ENCODE measurements at regions of chr5 and their contacts with region 1.

Region 1: GRCh38 chr5:141757402-141757801 is 75.4 kb upstream of the ARAP3 start:
- DNase-seq: peak; percentile 70
- ATAC-seq: peak; percentile 62
- H3K4me3 Mint-ChIP-seq: peak overlapping the region; percentile 24; the same call in 1 of the 2 replicates
- H3K27ac Mint-ChIP-seq: no peak overlapping the region
- H3K4me1 Mint-ChIP-seq: peaks cover 49% of the 10 kb centered on the region
- H3K27me3 Mint-ChIP-seq: peaks cover 21% of the 10 kb centered on the region
- CTCF ChIP-seq: 0 out of 2 replicates have a peak, but pooled peaks have one; percentile 13

Region 2: DNA sequence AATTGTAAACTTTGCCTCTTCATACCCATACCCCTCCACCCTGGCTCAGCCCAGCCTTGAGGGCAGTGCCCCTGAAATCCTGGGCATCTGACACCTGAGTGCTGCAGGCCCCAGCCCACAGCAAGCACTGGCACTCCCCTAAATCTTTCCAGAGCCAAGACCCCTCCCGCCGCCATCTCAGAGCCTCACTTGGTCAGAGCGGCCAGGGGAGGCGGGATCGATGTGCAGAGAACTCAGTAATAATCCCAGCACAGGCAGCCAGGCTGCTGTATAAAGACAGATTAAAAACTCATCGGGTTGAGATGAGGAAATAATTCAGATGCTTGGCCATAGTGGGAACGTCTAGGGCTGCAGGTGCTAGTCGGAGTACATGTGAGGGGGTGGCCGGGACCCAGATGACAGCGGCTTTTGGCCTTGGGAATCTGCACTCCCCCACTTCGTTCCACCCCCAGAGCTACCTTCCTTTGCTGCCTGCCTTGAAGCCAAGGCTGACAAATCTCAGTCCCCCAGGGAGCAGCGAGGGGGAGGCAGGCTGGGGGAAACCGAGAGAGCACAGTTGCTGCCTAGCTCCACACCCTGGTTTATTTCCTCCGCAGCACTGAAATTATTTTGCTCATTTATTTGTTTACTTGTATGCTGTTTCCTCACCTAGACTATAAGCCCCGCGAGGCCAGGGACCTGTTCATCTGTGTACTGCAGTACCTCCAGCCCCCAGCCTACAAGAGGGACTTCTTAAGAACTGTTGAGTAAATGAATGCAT is 55.9 kb before region 1 on chr5:
- CTCF ChIA-PET with region 1: interaction called, 39 read pairs
- POLR2A ChIA-PET with region 1: no interaction called
- DNase-seq: no peak
- ATAC-seq: no peak
- H3K4me3 Mint-ChIP-seq: no peak overlapping the region; the same call in 1 of the 2 replicates
- H3K27ac Mint-ChIP-seq: no peak overlapping the region
- H3K4me1 Mint-ChIP-seq: peaks cover 22% of the 10 kb centered on the region
- H3K27me3 Mint-ChIP-seq: peaks cover 6% of the 10 kb centered on the region
- CTCF ChIP-seq: no peak

Region 3: DNA sequence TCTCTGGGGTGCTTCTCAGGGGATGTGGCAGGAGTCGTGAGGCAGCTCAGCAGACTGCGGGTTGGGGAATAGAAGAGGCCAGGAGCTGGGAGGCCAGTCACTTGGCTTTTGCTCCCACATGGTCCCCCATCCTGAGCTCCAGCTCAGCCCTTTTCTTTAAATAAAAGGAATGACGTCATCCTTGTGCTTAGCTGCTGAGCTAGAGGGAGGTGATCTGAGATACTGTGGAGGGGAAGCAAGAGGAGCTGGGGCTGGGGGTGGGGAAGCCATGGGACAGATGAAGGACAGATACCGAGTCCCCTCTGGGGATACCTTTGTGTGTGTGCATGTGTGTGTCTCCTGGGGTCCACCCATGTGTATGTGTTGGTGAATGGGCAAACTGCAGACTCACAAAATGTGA is 13.6 kb after region 1 on chr5:
- CTCF ChIA-PET with region 1: interaction called, 24 read pairs
- POLR2A ChIA-PET with region 1: no interaction called
- DNase-seq: no peak
- ATAC-seq: 0 out of 2 replicates have a peak, but pooled peaks have one; percentile 13
- H3K4me3 Mint-ChIP-seq: no peak overlapping the region
- H3K27ac Mint-ChIP-seq: no peak overlapping the region
- H3K4me1 Mint-ChIP-seq: peaks cover 20% of the 10 kb centered on the region
- H3K27me3 Mint-ChIP-seq: peaks cover 2% of the 10 kb centered on the region; the same call in 1 of the 2 replicates
- CTCF ChIP-seq: no peak

Region 4: DNA sequence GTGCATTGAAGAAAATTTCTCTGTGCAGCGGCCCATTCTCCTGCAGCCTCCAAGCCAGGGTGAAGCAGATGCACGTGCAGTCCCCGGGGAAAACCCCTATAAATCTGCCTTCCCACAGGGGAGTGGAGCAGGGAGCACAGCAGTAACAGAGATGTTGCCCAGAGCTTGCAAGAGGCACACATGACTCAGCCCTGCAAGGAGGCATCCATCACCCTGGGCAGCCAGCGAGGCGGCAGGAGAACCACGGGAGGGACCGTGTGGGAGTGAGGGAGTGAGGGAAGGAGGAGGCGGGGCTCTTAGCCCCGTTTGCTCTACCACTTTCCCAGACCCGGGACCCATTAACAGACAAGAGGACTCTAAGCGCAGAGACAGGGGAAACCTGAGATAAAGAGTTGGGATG is 20.8 kb after region 1 on chr5:
- CTCF ChIA-PET with region 1: interaction called, 24 read pairs
- POLR2A ChIA-PET with region 1: no interaction called
- DNase-seq: no peak
- ATAC-seq: peak; percentile 45
- H3K4me3 Mint-ChIP-seq: no peak overlapping the region
- H3K27ac Mint-ChIP-seq: no peak overlapping the region
- H3K4me1 Mint-ChIP-seq: peaks cover 38% of the 10 kb centered on the region
- H3K27me3 Mint-ChIP-seq: no peaks in the 10 kb centered on the region
- CTCF ChIP-seq: no peak

Region 5: GRCh38 chr5:141805874-141806595 is 48.6 kb after region 1 on chr5:
- CTCF ChIA-PET with region 1: interaction called, 152 read pairs
- POLR2A ChIA-PET with region 1: interaction called, 7 read pairs
- DNase-seq: no peak
- ATAC-seq: no peak
- H3K4me3 Mint-ChIP-seq: no peak overlapping the region
- H3K27ac Mint-ChIP-seq: peak overlapping the region; percentile 56; the same call in 1 of the 2 replicates
- H3K4me1 Mint-ChIP-seq: peaks cover 75% of the 10 kb centered on the region
- H3K27me3 Mint-ChIP-seq: peaks cover 3% of the 10 kb centered on the region; the same call in 1 of the 2 replicates
- CTCF ChIP-seq: no peak

Region 6: DNA sequence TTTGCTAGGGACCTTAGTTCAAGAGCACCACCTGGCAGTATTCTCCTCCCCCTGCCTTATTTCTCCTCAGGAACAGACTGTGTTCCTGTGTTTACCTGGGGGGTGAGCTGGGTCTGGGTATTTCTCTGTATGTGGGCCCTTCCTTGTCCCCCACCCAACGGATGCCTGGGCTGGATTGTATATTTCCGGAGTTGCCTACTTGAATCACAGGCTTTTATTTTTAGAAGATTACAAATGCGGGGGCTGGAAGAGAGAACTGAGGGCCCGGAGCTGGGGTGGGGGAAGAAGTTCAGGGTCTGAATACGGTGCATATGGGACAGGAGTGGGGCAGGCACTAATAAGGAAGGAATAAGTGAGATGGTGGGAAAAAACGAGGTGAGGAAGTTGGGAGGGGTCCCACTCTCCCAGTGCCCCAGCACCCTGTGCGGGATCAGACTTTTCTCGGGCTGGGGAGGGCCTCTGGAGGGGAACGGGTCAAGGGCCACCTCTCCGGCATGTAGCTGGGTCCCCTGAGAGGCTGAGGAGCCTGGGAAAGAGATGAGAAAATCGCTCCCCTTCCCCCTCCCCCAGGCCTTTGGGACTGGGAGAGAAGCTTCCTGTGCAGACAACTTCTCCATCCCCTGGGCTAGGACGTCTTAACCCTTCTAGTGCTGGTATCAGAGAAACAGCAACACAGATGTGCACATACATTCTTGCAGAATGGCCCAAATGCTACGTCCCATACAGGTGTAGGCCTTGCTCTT is 78.7 kb after region 1 on chr5:
- CTCF ChIA-PET with region 1: interaction called, 21 read pairs
- POLR2A ChIA-PET with region 1: interaction called, 3 read pairs
- DNase-seq: no peak
- ATAC-seq: peak; percentile 5; the same call in 1 of the 2 replicates
- H3K4me3 Mint-ChIP-seq: peak overlapping the region; percentile 29; the same call in 1 of the 2 replicates
- H3K27ac Mint-ChIP-seq: peak overlapping the region; percentile 96
- H3K4me1 Mint-ChIP-seq: peaks cover 76% of the 10 kb centered on the region
- H3K27me3 Mint-ChIP-seq: peaks cover 8% of the 10 kb centered on the region
- CTCF ChIP-seq: no peak

Region 7: DNA sequence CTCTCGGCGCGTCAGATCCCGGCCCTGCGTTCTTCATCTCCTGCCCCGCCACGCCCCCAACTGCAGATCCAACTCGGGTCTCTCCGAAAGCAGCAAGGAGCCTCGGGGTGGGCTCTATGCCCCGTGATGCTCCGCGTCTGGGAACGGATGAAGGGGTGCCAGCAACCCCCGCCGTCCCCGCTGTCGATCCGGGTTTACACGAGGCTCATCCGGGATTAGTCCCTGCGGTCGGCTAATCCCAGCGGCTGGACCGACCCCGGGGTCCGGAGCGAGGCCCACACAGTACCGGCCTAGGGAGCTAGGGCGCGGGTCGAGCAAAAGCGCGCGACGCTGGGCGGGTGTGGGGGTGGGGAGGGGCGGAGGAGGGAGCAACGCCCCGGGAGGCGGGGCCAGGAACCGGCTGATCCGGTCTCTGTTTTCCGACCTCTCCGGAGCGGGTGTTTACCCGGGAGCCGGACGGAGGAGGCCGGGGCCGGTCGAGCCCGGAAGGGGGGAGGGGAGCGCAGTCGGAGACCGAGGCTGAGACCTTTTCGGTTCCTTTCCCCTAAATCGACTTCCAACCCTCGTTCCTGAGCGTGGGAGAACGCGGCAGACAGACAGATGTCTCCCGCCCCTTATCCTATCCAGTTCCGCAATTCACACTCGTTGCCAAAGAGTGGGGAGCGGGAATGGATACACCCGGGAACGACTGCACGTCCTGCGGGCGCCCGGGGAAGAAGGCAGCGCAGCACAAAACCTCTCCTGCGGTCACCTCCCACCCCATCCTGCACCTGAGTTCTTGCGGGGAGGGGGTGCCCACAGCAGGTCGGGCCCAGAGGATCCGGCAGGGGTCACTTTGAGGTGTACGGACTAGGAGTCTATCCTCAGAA is 92.2 kb after region 1 on chr5:
- CTCF ChIA-PET with region 1: interaction called, 12 read pairs
- POLR2A ChIA-PET with region 1: interaction called, 3 read pairs
- DNase-seq: peak; percentile 94
- ATAC-seq: peak; percentile 47
- H3K4me3 Mint-ChIP-seq: peak overlapping the region; percentile 73
- H3K27ac Mint-ChIP-seq: peak overlapping the region; percentile 99
- H3K4me1 Mint-ChIP-seq: peaks cover 68% of the 10 kb centered on the region
- H3K27me3 Mint-ChIP-seq: no peaks in the 10 kb centered on the region
- CTCF ChIP-seq: no peak

Measured in WTC11 (cell line).